ENCODE measurements at regions of chr9 and their contacts with region 1.

Region 1: DNA sequence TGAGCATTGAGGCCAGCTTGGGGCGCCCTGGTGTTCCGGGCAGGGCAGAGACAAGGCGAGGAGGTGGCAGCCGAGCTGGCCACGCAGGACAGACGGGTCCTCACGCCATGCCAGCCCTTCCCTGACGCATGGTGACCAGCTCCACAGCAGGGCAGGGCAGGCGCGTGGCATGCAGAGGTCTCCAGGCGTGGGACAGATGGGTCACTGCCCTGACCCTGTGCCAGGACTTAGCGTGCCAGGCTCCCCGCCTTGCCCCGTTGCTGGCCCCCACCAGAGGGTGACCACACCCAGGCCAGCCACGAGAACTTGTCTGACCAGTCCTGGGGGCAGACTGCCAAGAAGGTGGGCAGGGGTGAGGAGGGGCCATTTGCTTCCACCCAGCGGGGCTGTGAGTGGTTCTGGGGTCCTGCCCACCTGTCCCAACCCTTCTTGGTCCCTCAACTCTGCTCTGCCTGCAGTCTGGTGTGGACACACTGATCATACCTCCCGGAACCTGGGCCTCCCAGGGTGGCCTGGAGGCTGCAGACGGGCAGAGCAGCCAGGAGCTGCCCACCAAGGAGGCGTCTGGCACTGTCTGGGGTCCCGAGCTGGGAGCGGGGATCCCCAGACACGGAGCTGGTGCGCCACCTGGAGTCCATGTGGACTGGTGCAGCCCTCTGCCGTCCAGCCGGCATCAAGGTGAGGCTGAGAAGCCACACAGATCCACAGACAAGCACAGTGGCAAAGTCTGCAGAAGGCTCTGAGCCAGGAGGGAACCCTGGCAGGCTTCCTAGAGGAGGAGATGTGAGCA is at the start of gene RNF224:
- DNase-seq: peak; percentile 62 to 94
- H3K4me3 ChIP-seq: no peak within 1 kb of the TSS
- CTCF ChIP-seq: peak in 1 of 3 donors; percentile 91
- POLR2A ChIP-seq: no peak
- total RNA-seq, gene RNF224: 0.25 to 3.2 (median 2.4) TPM in 3 of 4 donors, not detected in the other

Region 2: DNA sequence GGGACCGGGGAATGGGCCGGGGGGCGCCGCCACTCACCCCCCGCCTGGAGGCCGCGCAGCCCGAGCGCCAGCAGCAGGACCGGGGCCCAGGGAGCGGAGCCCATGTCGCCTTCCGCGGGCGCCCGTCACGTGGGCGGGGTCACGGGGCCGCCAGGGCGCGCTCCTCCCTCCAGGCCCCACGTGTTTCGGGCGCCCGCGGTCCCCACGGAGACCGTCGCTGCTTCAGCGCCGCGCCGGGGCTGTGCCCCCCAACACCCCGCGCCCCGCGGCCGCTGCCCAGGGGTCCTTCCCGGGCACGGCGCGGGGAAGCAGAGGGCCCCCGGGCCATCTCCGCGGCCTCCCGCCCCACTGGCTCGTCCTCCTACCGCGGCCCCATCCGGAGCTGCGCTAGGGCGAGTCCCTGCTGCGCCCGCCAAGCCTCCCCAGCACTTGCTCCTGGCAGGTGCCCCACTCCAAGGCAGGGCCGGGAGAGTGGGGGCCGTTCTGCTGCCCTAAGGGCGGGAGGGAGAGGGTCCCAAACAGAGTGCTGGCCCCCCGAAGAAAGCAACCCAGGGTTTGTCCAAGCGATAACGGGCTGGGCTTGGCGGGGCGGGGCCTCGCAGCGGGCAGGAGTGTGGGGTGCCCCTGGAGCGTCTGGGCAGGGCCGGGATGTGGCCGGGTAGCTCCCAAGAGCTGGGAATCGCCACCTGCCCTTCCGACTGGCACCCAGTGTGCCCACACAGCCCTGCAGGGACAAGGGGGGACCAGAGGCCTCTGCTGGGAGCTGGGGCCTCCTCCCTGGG is 112.5 kb before region 1 on chr9 and contains the start of gene DPP7:
- intact Hi-C with region 1: loop called (anchors 5 kb)
- DNase-seq: peak; percentile 56 to 96
- H3K4me3 ChIP-seq: peak within 1 kb of the TSS; percentile 72
- CTCF ChIP-seq: no peak
- POLR2A ChIP-seq: no peak
- total RNA-seq, gene DPP7: 123 to 144 (median 138) TPM

Region 3: GRCh38 chr9:137175345-137175961 is 51.8 kb before region 1 on chr9:
- intact Hi-C with region 1: loop called (anchors 2 kb)
- DNase-seq: no peak
- H3K4me3 ChIP-seq: no peak overlapping the region
- CTCF ChIP-seq: no peak
- POLR2A ChIP-seq: no peak

Measured in lower leg skin (tissue), 4 donors.